Heart left ventricle (tissue), 16 donors: ENCODE measurements at regions of chr1 and their contacts with region 1.

Region 1: GRCh38 chr1:202286622-202287097 is 55.1 kb downstream of the UBE2T start:
- DNase-seq: peak in 4 of 5 donors; percentile 43 to 76 (median 65)
- ATAC-seq: peak; percentile 82 to 91 (median 88)
- H3K4me3 ChIP-seq: no peak overlapping the region
- H3K27ac ChIP-seq: peak overlapping the region in 11 of 12 donors; percentile 11 to 80 (median 47)
- H3K4me1 ChIP-seq: peaks cover 0 to 23% (median 6%) of the 10 kb centered on the region in 12 donors
- H3K27me3 ChIP-seq: no peaks in the 10 kb centered on the region
- CTCF ChIP-seq: peak in 1 of 12 donors; percentile 14
- POLR2A ChIP-seq: no peak

Region 2: DNA sequence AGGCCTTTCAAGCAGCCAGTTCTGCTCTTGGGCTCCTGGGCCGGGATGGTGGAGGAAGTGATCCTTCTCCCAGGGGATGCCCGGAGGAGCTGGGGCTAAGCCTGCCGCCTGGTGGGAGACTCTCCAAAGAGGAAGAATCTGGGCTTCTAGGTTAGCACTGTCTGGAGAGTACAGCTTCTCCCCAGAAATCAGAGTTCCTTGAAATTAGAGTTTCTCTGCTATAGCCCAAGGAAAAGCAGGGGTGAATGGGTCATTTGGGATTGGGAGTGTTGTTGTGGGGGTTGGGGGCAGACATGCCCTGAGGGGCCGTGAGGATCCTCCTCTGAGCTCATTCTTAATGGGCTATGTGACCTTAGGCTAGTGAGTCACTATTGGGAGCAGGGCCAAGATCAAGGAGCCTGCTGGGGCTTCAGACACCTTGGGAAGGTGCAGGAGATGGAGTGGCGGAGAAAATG is 86.5 kb before region 1 on chr1:
- intact Hi-C with region 1: loop called in 1 of 10 experiments (anchors 5 kb)
- DNase-seq: no peak
- ATAC-seq: peak in 3 of 4 donors; percentile 3 to 8 (median 3)
- H3K4me3 ChIP-seq: no peak overlapping the region
- H3K27ac ChIP-seq: peak overlapping the region; percentile 36 to 90 (median 83)
- H3K4me1 ChIP-seq: peaks cover 0 to 38% (median 14%) of the 10 kb centered on the region in 12 donors
- H3K27me3 ChIP-seq: peaks cover 0 to 8% (median 0%) of the 10 kb centered on the region in 9 donors
- CTCF ChIP-seq: peak in 2 of 12 donors; percentile 9 to 30
- POLR2A ChIP-seq: no peak